Naive thymus-derived CD4-positive, alpha-beta T cell (primary cell): ENCODE measurements at regions of chr7 and their contacts with region 1.

Region 1: GRCh38 chr7:21427182-21427870 is 557 bp upstream of the SP4 start:
- DNase-seq: peak; percentile 98 to 100 (median 99)
- ATAC-seq: peak; percentile 85
- H3K4me3 ChIP-seq: peak overlapping the region; percentile 99
- H3K4me3 Mint-ChIP-seq: peak overlapping the region; percentile 94 to 99 (median 98)
- H3K27ac ChIP-seq: peak overlapping the region; percentile 99
- H3K27ac Mint-ChIP-seq: peak overlapping the region; percentile 94 to 100 (median 99)
- H3K4me1 ChIP-seq: peaks cover 37 to 41% of the 10 kb centered on the region in 2 donors
- H3K4me1 Mint-ChIP-seq: peaks cover 24 to 52% (median 52%) of the 10 kb centered on the region in 7 donors
- H3K27me3 ChIP-seq: no peaks in the 10 kb centered on the region
- H3K27me3 Mint-ChIP-seq: no peaks in the 10 kb centered on the region

Region 2: DNA sequence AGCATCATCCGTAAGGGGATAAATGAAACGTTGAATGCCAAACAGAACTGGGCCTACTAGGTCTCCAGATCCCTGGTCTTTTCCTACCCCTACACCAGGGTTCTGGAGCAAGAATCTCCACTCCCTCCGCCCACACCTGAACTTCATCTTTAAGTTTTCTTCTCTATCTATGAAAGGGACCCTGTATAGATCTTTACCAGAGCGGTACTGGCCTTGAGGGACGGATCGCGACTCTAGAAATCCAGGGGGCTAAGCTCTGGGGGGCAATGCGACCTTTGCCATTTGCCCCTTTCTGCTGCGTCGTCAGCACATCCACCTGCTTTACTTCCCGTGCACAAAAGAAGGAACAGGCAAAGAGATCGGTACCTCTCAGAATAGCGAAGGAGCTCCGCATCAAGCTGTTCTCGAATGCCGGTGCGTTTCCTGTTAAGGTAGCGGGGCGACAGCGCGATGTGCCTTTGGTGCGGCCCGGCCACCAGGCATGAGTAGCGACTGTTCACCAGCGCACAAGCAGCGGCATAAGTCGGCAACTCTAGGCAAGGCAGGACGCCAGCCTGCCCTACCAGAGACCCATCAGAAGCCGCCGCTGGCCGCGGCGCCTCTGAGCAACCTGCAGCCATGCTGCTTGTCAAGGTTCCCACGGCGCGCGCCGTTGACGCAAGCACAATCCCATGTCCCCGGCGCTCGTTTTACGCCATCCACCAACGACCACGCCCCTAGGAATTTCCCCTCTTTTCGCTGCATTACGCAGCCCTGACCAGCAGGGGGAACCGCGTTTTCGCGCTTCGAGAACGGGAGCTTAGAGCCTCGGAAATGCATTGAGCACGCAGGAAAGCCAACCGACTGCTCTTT is 1718.7 kb before region 1 on chr7 and contains the start of gene POLR1F:
- CTCF ChIA-PET with region 1: no interaction called
- POLR2A ChIA-PET with region 1: no interaction called
- intact Hi-C with region 1: loop called in 1 of 2 experiments (anchors 1 kb)
- DNase-seq: peak; percentile 84 to 97 (median 95)
- ATAC-seq: peak; percentile 98
- H3K4me3 ChIP-seq: peak within 1 kb of the TSS; percentile 70
- H3K4me3 Mint-ChIP-seq: peak within 1 kb of the TSS; percentile 95 to 99 (median 97)
- H3K27ac ChIP-seq: peak within 1 kb of the TSS; percentile 77
- H3K27ac Mint-ChIP-seq: peak within 1 kb of the TSS; percentile 89 to 98 (median 95)
- H3K4me1 ChIP-seq: peaks cover 19 to 23% of the 10 kb centered on the region in 2 donors
- H3K4me1 Mint-ChIP-seq: peaks cover 31 to 66% (median 57%) of the 10 kb centered on the region in 7 donors
- H3K27me3 ChIP-seq: no peaks in the 10 kb centered on the region
- H3K27me3 Mint-ChIP-seq: peaks cover 0 to 5% (median 0%) of the 10 kb centered on the region in 5 donors
- total RNA-seq, gene POLR1F: 11.8 to 27.3 (median 19.0) TPM

Region 3: DNA sequence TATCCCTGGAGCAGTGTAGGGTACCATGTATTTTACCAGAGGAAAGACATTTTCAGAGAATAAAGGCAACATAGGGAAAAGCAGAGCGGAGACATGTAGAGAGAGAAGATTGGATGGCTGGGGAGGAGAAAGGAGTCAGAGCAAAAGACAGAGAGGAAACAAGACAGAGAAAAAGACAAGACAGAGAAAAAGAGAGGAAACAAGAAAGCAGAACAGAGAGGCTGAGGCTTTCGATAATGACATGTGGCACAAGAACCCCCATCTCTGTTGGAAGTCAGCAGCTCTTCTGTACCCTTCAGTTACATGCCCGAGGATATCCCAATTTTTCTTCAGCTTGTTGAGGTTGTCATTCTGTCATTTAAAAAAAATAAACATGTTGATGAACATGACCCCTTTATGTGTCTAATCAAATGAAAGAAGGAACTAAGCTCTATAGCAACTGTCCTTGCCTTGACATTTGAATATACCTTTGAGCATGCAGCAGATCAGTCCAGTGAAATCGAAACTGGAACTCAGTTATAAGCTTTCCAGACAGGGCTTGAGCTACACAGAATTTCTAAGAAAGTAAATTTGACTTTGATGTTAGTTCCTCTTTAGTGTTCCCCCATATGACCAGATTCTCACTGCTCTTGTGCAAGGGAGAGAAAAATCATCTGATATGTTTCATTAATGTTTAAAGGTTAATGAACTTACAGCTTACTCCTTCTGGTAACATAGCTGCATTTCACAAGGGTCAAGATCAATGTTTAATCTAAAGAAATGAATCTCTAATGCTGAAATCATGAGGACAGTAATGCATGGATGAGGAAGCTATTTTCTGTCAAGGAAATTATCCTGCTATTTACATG is 74.6 kb before region 1 on chr7:
- CTCF ChIA-PET with region 1: interaction called, 3 read pairs
- POLR2A ChIA-PET with region 1: interaction called, 15 read pairs
- intact Hi-C with region 1: loop called (anchors 1 kb)
- DNase-seq: peak in 7 of 9 donors; percentile 25 to 60 (median 47)
- ATAC-seq: peak; percentile 80
- H3K4me3 ChIP-seq: peak overlapping the region; percentile 22
- H3K4me3 Mint-ChIP-seq: peak overlapping the region; percentile 51 to 86 (median 76)
- H3K27ac ChIP-seq: peak overlapping the region; percentile 43
- H3K27ac Mint-ChIP-seq: peak overlapping the region; percentile 76 to 95 (median 89)
- H3K4me1 ChIP-seq: peaks cover 41 to 56% of the 10 kb centered on the region in 2 donors
- H3K4me1 Mint-ChIP-seq: peaks cover 39 to 68% (median 54%) of the 10 kb centered on the region in 7 donors
- H3K27me3 ChIP-seq: no peaks in the 10 kb centered on the region
- H3K27me3 Mint-ChIP-seq: no peaks in the 10 kb centered on the region

Region 4: GRCh38 chr7:21542891-21543527 is 115.7 kb after region 1 on chr7 and contains the start of gene DNAH11:
- CTCF ChIA-PET with region 1: no interaction called
- POLR2A ChIA-PET with region 1: no interaction called
- intact Hi-C with region 1: loop called in 1 of 2 experiments (anchors 2 kb)
- DNase-seq: peak in 1 of 9 donors; percentile 59
- ATAC-seq: peak; percentile 65
- H3K4me3 ChIP-seq: no peak within 1 kb of the TSS
- H3K4me3 Mint-ChIP-seq: peak within 1 kb of the TSS; percentile 35 to 83 (median 62)
- H3K27ac ChIP-seq: no peak within 1 kb of the TSS
- H3K27ac Mint-ChIP-seq: peak within 1 kb of the TSS in 1 of 9 donors; percentile 67
- H3K4me1 ChIP-seq: no peaks in the 10 kb centered on the region
- H3K4me1 Mint-ChIP-seq: peaks cover 4 to 27% (median 6%) of the 10 kb centered on the region in 7 donors
- H3K27me3 ChIP-seq: no peaks in the 10 kb centered on the region
- H3K27me3 Mint-ChIP-seq: peaks cover 45 to 72% (median 59%) of the 10 kb centered on the region in 5 donors
- total RNA-seq, gene DNAH11: 0.03 to 8.1 (median 0.23) TPM in 4 of 5 experiments, not detected in the other

Region 5: GRCh38 chr7:21690705-21691104 is 263.4 kb after region 1 on chr7:
- CTCF ChIA-PET with region 1: no interaction called
- POLR2A ChIA-PET with region 1: no interaction called
- intact Hi-C with region 1: no loop called
- DNase-seq: no peak
- ATAC-seq: no peak
- H3K4me3 ChIP-seq: no peak overlapping the region
- H3K4me3 Mint-ChIP-seq: no peak overlapping the region
- H3K27ac ChIP-seq: no peak overlapping the region
- H3K27ac Mint-ChIP-seq: no peak overlapping the region
- H3K4me1 ChIP-seq: no peaks in the 10 kb centered on the region
- H3K4me1 Mint-ChIP-seq: no peaks in the 10 kb centered on the region
- H3K27me3 ChIP-seq: no peaks in the 10 kb centered on the region
- H3K27me3 Mint-ChIP-seq: peaks cover 0 to 3% (median 0%) of the 10 kb centered on the region in 5 donors

Region 6: GRCh38 chr7:22001345-22002004 is 574.1 kb after region 1 on chr7:
- CTCF ChIA-PET with region 1: no interaction called
- POLR2A ChIA-PET with region 1: no interaction called
- intact Hi-C with region 1: loop called (anchors 1 to 5 kb)
- DNase-seq: peak in 7 of 9 donors; percentile 14 to 69 (median 61)
- ATAC-seq: peak; percentile 81
- H3K4me3 ChIP-seq: no peak overlapping the region
- H3K4me3 Mint-ChIP-seq: peak overlapping the region in 7 of 10 donors; percentile 37 to 75 (median 61)
- H3K27ac ChIP-seq: no peak overlapping the region
- H3K27ac Mint-ChIP-seq: peak overlapping the region in 2 of 9 donors; percentile 26 to 53
- H3K4me1 ChIP-seq: no peaks in the 10 kb centered on the region
- H3K4me1 Mint-ChIP-seq: peaks cover 0 to 7% (median 2%) of the 10 kb centered on the region in 7 donors
- H3K27me3 ChIP-seq: no peaks in the 10 kb centered on the region
- H3K27me3 Mint-ChIP-seq: peaks cover 0 to 15% (median 9%) of the 10 kb centered on the region in 5 donors

Region 7: GRCh38 chr7:23013715-23014649 is 1586.7 kb after region 1 on chr7 and contains the start of gene HYCC1:
- CTCF ChIA-PET with region 1: no interaction called
- POLR2A ChIA-PET with region 1: no interaction called
- intact Hi-C with region 1: loop called in 1 of 2 experiments (anchors 1 kb)
- DNase-seq: peak; percentile 96 to 100 (median 99)
- ATAC-seq: peak; percentile 99
- H3K4me3 ChIP-seq: peak within 1 kb of the TSS; percentile 82
- H3K4me3 Mint-ChIP-seq: peak within 1 kb of the TSS; percentile 8 to 98 (median 96)
- H3K27ac ChIP-seq: peak within 1 kb of the TSS; percentile 67
- H3K27ac Mint-ChIP-seq: peak within 1 kb of the TSS; percentile 60 to 96 (median 88)
- H3K4me1 ChIP-seq: peaks cover 5 to 15% of the 10 kb centered on the region in 2 donors
- H3K4me1 Mint-ChIP-seq: peaks cover 8 to 35% (median 27%) of the 10 kb centered on the region in 7 donors
- H3K27me3 ChIP-seq: no peaks in the 10 kb centered on the region
- H3K27me3 Mint-ChIP-seq: peaks cover 0 to 3% (median 0%) of the 10 kb centered on the region in 5 donors
- total RNA-seq, gene HYCC1: 14.2 to 67.0 (median 18.3) TPM